ENCODE measurements at regions of chr1 and their contacts with region 1.

Region 1: GRCh38 chr1:8727809-8728213 is 89.6 kb downstream of the RERE start:
- DNase-seq: no peak
- H3K4me3 ChIP-seq: no peak overlapping the region
- H3K27ac ChIP-seq: peak overlapping the region in 2 of 4 donors; percentile 24 to 35
- H3K4me1 ChIP-seq: peaks cover 0 to 41% (median 27%) of the 10 kb centered on the region in 4 donors
- H3K27me3 ChIP-seq: no peaks in the 10 kb centered on the region
- CTCF ChIP-seq: no peak
- EP300 ChIP-seq: no peak
- POLR2A ChIP-seq: no peak

Region 2: DNA sequence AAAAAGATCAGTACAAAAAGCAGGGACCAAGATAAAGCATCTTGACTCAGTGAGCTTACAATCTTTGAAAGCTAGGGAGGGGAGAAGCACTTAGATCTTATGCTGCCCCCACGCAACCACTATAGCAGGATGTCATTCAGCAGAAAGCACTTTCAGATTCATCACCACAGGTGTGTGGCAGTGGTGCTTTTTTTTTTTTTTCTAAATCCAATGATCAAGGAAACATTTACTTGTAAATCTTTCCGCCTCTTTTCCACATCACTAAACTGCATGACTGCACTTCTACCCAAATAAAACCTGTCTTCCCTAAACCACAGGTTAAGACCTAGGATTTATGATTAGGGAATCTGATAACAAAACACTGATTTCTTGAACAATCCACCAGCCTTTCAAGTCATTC is 255.1 kb before region 1 on chr1:
- intact Hi-C with region 1: loop called (anchors 5 kb)
- DNase-seq: no peak
- H3K4me3 ChIP-seq: no peak overlapping the region
- H3K27ac ChIP-seq: no peak overlapping the region
- H3K4me1 ChIP-seq: peaks cover 0 to 36% (median 22%) of the 10 kb centered on the region in 4 donors
- H3K27me3 ChIP-seq: no peaks in the 10 kb centered on the region
- CTCF ChIP-seq: no peak
- EP300 ChIP-seq: no peak
- POLR2A ChIP-seq: no peak

Region 3: GRCh38 chr1:8560611-8561544 is 166.9 kb before region 1 on chr1:
- intact Hi-C with region 1: loop called (anchors 2 kb)
- DNase-seq: no peak
- H3K4me3 ChIP-seq: no peak overlapping the region
- H3K27ac ChIP-seq: no peak overlapping the region
- H3K4me1 ChIP-seq: peaks cover 0 to 28% (median 19%) of the 10 kb centered on the region in 4 donors
- H3K27me3 ChIP-seq: no peaks in the 10 kb centered on the region
- CTCF ChIP-seq: peak; percentile 88 to 92 (median 88)
- EP300 ChIP-seq: no peak
- POLR2A ChIP-seq: no peak

Region 4: DNA sequence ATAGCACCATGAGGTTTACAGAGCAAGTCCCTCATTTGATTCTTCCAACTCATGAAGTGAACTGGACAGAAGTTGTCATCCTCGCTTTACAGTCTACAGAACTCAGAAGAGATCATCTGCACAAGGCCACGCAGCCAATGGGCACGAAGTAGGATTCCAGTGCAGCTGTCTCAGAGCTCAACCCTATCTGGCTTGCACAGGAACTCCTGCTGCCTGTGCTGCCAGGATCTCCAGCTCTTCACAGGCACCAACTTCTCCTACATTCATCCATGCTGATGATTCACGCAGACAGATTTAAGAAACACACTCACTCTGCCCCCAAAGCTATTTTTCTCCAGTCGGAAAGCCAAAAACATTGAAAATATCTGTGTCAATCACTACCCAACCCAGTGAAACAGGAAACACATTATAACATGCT is 67.4 kb before region 1 on chr1:
- intact Hi-C with region 1: no loop called
- DNase-seq: peak; percentile 82
- H3K4me3 ChIP-seq: no peak overlapping the region
- H3K27ac ChIP-seq: peak overlapping the region; percentile 55 to 70 (median 61)
- H3K4me1 ChIP-seq: peaks cover 0 to 65% (median 61%) of the 10 kb centered on the region in 4 donors
- H3K27me3 ChIP-seq: no peaks in the 10 kb centered on the region
- CTCF ChIP-seq: no peak
- EP300 ChIP-seq: no peak
- POLR2A ChIP-seq: no peak

Region 5: DNA sequence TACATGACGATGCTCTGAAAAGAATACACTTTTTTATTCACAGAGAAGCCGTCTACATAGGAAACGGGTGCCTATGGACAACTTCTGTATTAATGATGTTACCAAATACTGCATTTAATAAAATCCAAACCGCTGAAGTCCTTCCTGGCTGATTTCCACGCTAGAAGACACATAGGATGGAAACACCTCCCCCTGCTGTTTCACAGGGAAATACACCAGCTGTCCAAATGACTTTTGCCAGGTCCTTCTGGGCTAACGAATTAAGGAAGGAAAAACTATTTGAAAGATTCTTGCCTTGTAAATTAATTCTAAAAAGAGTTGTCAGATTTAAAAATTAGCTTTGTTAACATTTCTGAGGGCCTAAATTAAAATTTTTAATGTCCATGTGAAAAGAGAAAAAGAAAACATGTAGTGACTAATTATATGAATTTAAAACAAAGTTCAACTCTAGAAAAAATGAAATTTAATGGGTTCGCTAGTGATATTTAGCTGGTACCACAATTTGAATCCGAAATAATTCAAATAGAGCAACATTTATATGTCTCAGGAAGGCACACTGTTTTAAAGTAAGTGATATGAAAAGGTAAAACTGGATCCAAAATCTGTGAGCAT is 56.4 kb before region 1 on chr1:
- intact Hi-C with region 1: loop called (anchors 5 kb)
- DNase-seq: peak; percentile 81
- H3K4me3 ChIP-seq: no peak overlapping the region
- H3K27ac ChIP-seq: peak overlapping the region in 2 of 4 donors; percentile 46 to 51
- H3K4me1 ChIP-seq: peaks cover 0 to 65% (median 51%) of the 10 kb centered on the region in 4 donors
- H3K27me3 ChIP-seq: no peaks in the 10 kb centered on the region
- CTCF ChIP-seq: peak; percentile 44 to 87 (median 76)
- EP300 ChIP-seq: no peak
- POLR2A ChIP-seq: no peak

Region 6: GRCh38 chr1:8848663-8849386 is 121.0 kb after region 1 on chr1:
- intact Hi-C with region 1: loop called (anchors 5 kb)
- DNase-seq: peak; percentile 97
- H3K4me3 ChIP-seq: no peak overlapping the region
- H3K27ac ChIP-seq: peak overlapping the region; percentile 54 to 75 (median 71)
- H3K4me1 ChIP-seq: peaks cover 0 to 21% (median 6%) of the 10 kb centered on the region in 4 donors
- H3K27me3 ChIP-seq: no peaks in the 10 kb centered on the region
- CTCF ChIP-seq: peak; percentile 57 to 92 (median 88)
- EP300 ChIP-seq: peak in 2 of 4 donors; percentile 14 to 51
- POLR2A ChIP-seq: no peak

Measured in sigmoid colon (tissue), 7 donors.